Activated T-helper 2 cell treated with anti-CD3 and anti-CD28 coated beads, Interferon-gamma antibody, Interleukin-2, Interleukin-4, amounts not matched to agents 10 μg/mL and 5 μg/mL and 100 μg/mL, durations not matched to agents 14 hours and 24 hours and 36 hours (primary cell): ENCODE measurements at regions of chr14 and their contacts with region 1.

Region 1: DNA sequence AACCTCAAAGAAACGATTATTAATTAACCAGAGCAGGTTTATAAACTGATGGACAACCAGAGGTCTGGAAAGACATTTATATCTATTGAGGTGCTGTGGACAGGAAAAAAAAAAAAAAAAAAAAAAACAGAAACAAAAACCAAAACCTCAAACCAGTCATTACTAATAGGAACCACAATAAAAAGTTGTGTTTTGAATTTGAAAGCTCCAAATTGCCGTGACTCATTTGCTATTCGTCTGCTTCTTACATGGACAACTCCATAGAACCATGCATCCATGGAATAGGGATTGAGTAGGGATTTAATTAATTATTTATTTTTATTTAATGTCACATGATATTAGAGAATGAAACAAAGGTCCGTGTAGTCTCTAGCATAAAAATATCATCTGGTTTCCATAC is 134.1 kb upstream of the SSTR1 start:
- DNase-seq: no peak
- H3K4me3 Mint-ChIP-seq: no peak overlapping the region
- H3K27ac Mint-ChIP-seq: no peak overlapping the region
- H3K4me1 Mint-ChIP-seq: peaks cover 32% of the 10 kb centered on the region
- H3K27me3 Mint-ChIP-seq: peaks cover 4% of the 10 kb centered on the region

Region 2: GRCh38 chr14:38107216-38107631 is 33.6 kb after region 1 on chr14:
- intact Hi-C with region 1: loop called (anchors 1 kb)
- DNase-seq: no peak
- H3K4me3 Mint-ChIP-seq: no peak overlapping the region
- H3K27ac Mint-ChIP-seq: no peak overlapping the region
- H3K4me1 Mint-ChIP-seq: peaks cover 16% of the 10 kb centered on the region
- H3K27me3 Mint-ChIP-seq: no peaks in the 10 kb centered on the region